CD8-positive, alpha-beta T cell (primary cell): ENCODE measurements at regions of chr18 and their contacts with region 1.

Region 1: DNA sequence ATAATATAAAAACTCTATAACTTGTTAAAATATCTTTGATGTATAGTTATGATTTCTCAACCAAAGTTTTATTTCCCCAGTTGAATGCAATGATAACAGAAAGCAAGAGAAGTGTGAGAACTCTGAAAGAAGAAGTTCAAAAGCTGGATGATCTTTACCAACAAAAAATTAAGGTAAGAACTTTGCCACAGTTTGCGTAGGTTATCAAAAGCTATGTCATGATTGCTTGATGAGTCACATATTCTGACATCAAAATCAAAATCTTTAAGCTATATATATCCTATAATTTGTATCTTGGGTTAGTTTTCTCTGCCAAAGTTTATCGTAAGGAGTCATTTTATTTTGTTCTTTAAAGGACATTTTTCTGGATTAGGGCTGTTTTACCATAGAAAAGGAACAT is 35.0 kb downstream of the NDC80 start:
- DNase-seq: peak in 2 of 9 experiments; percentile 38 to 70
- ATAC-seq: peak; percentile 56
- H3K4me3 ChIP-seq: no peak overlapping the region
- H3K4me3 Mint-ChIP-seq: peak overlapping the region; percentile 43
- H3K27ac ChIP-seq: peak overlapping the region; percentile 19 to 74
- H3K27ac Mint-ChIP-seq: peak overlapping the region; percentile 85
- H3K4me1 ChIP-seq: peaks cover 33% of the 10 kb centered on the region
- H3K4me1 Mint-ChIP-seq: peaks cover 54% of the 10 kb centered on the region
- H3K27me3 ChIP-seq: no peaks in the 10 kb centered on the region
- H3K27me3 Mint-ChIP-seq: no peaks in the 10 kb centered on the region
- CTCF ChIP-seq: no peak

Region 2: DNA sequence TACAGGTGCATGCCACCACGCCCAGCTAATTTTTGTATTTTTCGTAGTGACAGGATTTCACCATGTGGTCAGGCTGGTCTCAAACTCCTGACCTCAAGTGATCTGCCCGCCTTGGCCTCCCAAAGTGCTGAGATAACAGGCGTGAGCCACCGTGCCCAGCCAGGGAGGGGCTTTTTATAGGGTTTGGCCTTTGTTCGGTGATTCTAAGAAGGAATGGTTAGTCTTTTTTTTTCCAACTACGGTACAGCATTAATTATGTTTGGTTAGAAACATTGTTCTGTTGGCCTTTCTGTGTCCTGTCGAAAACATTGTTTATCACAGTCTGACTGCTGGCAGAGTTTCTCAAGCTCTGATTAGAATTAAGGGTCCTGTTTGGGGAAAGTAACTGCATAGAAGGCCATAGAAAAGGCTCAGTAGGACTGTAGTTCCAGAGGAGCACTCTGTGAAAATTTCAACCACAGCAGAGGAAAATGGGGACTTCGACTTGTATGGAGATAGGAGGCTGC is 29.8 kb after region 1 on chr18:
- CTCF ChIA-PET with region 1: interaction called, 9 read pairs
- POLR2A ChIA-PET with region 1: interaction called, 49 read pairs
- intact Hi-C with region 1: loop called (anchors 1 kb)
- DNase-seq: peak in 2 of 9 experiments; percentile 22 to 65
- ATAC-seq: peak; percentile 43
- H3K4me3 ChIP-seq: peak overlapping the region; percentile 41 to 44
- H3K4me3 Mint-ChIP-seq: peak overlapping the region; percentile 83
- H3K27ac ChIP-seq: peak overlapping the region; percentile 92 to 95
- H3K27ac Mint-ChIP-seq: peak overlapping the region; percentile 100
- H3K4me1 ChIP-seq: peaks cover 64% of the 10 kb centered on the region
- H3K4me1 Mint-ChIP-seq: peaks cover 88% of the 10 kb centered on the region
- H3K27me3 ChIP-seq: no peaks in the 10 kb centered on the region
- H3K27me3 Mint-ChIP-seq: no peaks in the 10 kb centered on the region
- CTCF ChIP-seq: no peak

Region 3: GRCh38 chr18:2641638-2642037 is 35.3 kb after region 1 on chr18:
- CTCF ChIA-PET with region 1: interaction called, 9 read pairs
- POLR2A ChIA-PET with region 1: interaction called, 49 read pairs
- intact Hi-C with region 1: loop called (anchors 1 kb)
- DNase-seq: peak in 2 of 9 experiments; percentile 62 to 83
- ATAC-seq: peak; percentile 31
- H3K4me3 ChIP-seq: peak overlapping the region; percentile 22 to 29
- H3K4me3 Mint-ChIP-seq: peak overlapping the region; percentile 79
- H3K27ac ChIP-seq: peak overlapping the region; percentile 40 to 92
- H3K27ac Mint-ChIP-seq: peak overlapping the region; percentile 95
- H3K4me1 ChIP-seq: peaks cover 72% of the 10 kb centered on the region
- H3K4me1 Mint-ChIP-seq: peaks cover 48% of the 10 kb centered on the region
- H3K27me3 ChIP-seq: no peaks in the 10 kb centered on the region
- H3K27me3 Mint-ChIP-seq: no peaks in the 10 kb centered on the region
- CTCF ChIP-seq: no peak